CD4-positive, alpha-beta T cell (primary cell): ENCODE measurements at regions of chr3 and their contacts with region 1.

Region 1: GRCh38 chr3:112561731-112562688 is at the starts of genes ATG3 and SLC35A5:
- DNase-seq: peak; percentile 98 to 100 (median 99)
- ATAC-seq: peak; percentile 75
- H3K4me3 ChIP-seq: peak within 1 kb of the TSS; percentile 85
- H3K4me3 Mint-ChIP-seq: peak within 1 kb of the TSS; percentile 100
- H3K27ac ChIP-seq: peak within 1 kb of the TSS; percentile 94 to 98
- H3K27ac Mint-ChIP-seq: peak within 1 kb of the TSS; percentile 100
- H3K4me1 ChIP-seq: peaks cover 17% of the 10 kb centered on the region
- H3K4me1 Mint-ChIP-seq: peaks cover 73% of the 10 kb centered on the region
- H3K27me3 ChIP-seq: no peaks in the 10 kb centered on the region
- H3K27me3 Mint-ChIP-seq: no peaks in the 10 kb centered on the region
- CTCF ChIP-seq: no peak
- total RNA-seq, gene ATG3: 43.3 to 43.8 TPM
- total RNA-seq, gene SLC35A5: 4.6 to 7.3 TPM

Region 2: DNA sequence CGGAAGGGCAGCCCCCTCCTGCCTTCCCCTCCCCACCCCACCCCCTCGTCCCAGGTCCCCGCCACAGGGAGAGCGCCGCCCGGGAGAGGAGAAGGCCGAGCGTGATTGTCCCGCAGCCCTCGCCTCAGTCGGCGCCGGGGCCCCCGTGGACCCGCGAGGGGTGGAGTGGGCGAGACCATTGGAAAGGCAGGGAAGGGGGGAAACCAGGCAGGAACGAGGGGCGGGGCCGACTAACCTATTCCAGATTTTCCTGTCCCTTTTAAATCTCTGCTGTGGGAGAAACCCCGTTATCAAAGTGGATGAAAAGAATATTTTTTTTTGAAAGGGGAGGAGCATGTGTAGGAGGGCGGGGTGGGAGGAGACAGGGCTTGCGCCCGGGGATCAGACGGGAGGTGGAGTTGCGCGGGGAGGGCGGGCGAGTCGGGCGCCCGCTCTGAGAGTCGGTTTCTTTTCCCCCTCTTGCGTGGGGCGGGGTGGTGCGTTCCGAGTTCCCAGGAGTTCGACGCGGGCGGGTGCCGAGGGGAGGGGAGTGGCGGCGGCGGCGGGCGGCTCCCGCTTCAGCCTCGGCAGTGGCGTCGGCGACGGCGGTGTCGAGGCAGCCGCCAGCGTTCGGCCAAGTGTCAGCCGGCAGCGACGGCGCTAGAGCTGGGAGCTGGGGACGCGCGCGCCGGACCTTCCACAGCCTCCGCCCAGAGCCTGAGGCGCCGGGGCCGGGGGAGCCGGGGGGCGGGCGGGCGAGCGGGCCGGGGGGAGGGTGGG is 1490.6 kb before region 1 on chr3 and contains the start of gene NECTIN3:
- CTCF ChIA-PET with region 1: no interaction called
- POLR2A ChIA-PET with region 1: no interaction called
- intact Hi-C with region 1: loop called in 1 of 2 experiments (anchors 5 kb)
- DNase-seq: peak; percentile 71 to 95 (median 83)
- ATAC-seq: peak; percentile 93
- H3K4me3 ChIP-seq: peak within 1 kb of the TSS; percentile 78
- H3K4me3 Mint-ChIP-seq: peak within 1 kb of the TSS; percentile 97
- H3K27ac ChIP-seq: no peak within 1 kb of the TSS
- H3K27ac Mint-ChIP-seq: peak within 1 kb of the TSS; percentile 90
- H3K4me1 ChIP-seq: peaks cover 19% of the 10 kb centered on the region
- H3K4me1 Mint-ChIP-seq: peaks cover 44% of the 10 kb centered on the region
- H3K27me3 ChIP-seq: peaks cover 0 to 18% of the 10 kb centered on the region in 2 experiments
- H3K27me3 Mint-ChIP-seq: peaks cover 35% of the 10 kb centered on the region
- CTCF ChIP-seq: no peak
- total RNA-seq, gene NECTIN3: 7.8 to 8.5 TPM

Region 3: DNA sequence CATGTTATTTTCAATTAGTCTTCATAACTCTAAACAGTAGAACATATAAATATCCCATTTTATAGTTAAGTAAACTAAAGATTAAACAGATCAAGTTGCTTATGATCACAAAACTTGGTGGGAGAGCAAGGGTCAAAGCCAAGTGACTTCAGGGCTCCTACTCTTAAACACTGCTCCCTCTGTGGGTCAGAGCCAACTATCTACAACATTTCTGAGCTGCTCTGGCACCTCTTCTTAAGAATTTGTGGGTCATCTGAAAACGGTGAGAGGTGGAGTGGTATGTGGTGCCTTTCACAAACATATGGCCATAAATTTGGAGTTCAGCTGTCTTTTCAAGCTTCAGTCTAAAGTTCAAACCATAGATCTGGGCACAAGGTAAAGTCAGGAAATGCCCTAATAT is 11.2 kb before region 1 on chr3:
- CTCF ChIA-PET with region 1: interaction called, 5 read pairs
- POLR2A ChIA-PET with region 1: interaction called, 10 read pairs
- intact Hi-C with region 1: no loop called
- DNase-seq: no peak
- ATAC-seq: no peak
- H3K4me3 ChIP-seq: no peak overlapping the region
- H3K4me3 Mint-ChIP-seq: no peak overlapping the region
- H3K27ac ChIP-seq: no peak overlapping the region
- H3K27ac Mint-ChIP-seq: no peak overlapping the region
- H3K4me1 ChIP-seq: no peaks in the 10 kb centered on the region
- H3K4me1 Mint-ChIP-seq: peaks cover 40% of the 10 kb centered on the region
- H3K27me3 ChIP-seq: no peaks in the 10 kb centered on the region
- H3K27me3 Mint-ChIP-seq: no peaks in the 10 kb centered on the region
- CTCF ChIP-seq: no peak

Region 4: GRCh38 chr3:112579697-112580096 is 17.7 kb after region 1 on chr3:
- CTCF ChIA-PET with region 1: no interaction called
- POLR2A ChIA-PET with region 1: no interaction called
- intact Hi-C with region 1: no loop called
- DNase-seq: no peak
- ATAC-seq: no peak
- H3K4me3 ChIP-seq: no peak overlapping the region
- H3K4me3 Mint-ChIP-seq: no peak overlapping the region
- H3K27ac ChIP-seq: no peak overlapping the region
- H3K27ac Mint-ChIP-seq: no peak overlapping the region
- H3K4me1 ChIP-seq: no peaks in the 10 kb centered on the region
- H3K4me1 Mint-ChIP-seq: peaks cover 5% of the 10 kb centered on the region
- H3K27me3 ChIP-seq: no peaks in the 10 kb centered on the region
- H3K27me3 Mint-ChIP-seq: no peaks in the 10 kb centered on the region
- CTCF ChIP-seq: no peak

Region 5: GRCh38 chr3:112990672-112991602 is 428.9 kb after region 1 on chr3 and contains the start of gene GTPBP8:
- CTCF ChIA-PET with region 1: interaction called, 3 read pairs
- POLR2A ChIA-PET with region 1: interaction called, 14 read pairs
- intact Hi-C with region 1: no loop called
- DNase-seq: peak; percentile 68 to 93 (median 80)
- ATAC-seq: peak; percentile 89
- H3K4me3 ChIP-seq: peak within 1 kb of the TSS; percentile 74
- H3K4me3 Mint-ChIP-seq: peak within 1 kb of the TSS; percentile 97
- H3K27ac ChIP-seq: peak within 1 kb of the TSS; percentile 85 to 96
- H3K27ac Mint-ChIP-seq: peak within 1 kb of the TSS; percentile 93
- H3K4me1 ChIP-seq: peaks cover 26% of the 10 kb centered on the region
- H3K4me1 Mint-ChIP-seq: peaks cover 81% of the 10 kb centered on the region
- H3K27me3 ChIP-seq: no peaks in the 10 kb centered on the region
- H3K27me3 Mint-ChIP-seq: no peaks in the 10 kb centered on the region
- CTCF ChIP-seq: no peak
- total RNA-seq, gene GTPBP8: 27.0 to 30.3 TPM

Region 6: GRCh38 chr3:113514265-113514769 is 952.3 kb after region 1 on chr3:
- CTCF ChIA-PET with region 1: no interaction called
- POLR2A ChIA-PET with region 1: interaction called, 3 read pairs
- intact Hi-C with region 1: loop called (anchors 5 to 10 kb)
- DNase-seq: peak in 1 of 14 experiments; percentile 6
- ATAC-seq: peak; percentile 0
- H3K4me3 ChIP-seq: peak overlapping the region; percentile 82
- H3K4me3 Mint-ChIP-seq: no peak overlapping the region
- H3K27ac ChIP-seq: peak overlapping the region; percentile 87 to 93
- H3K27ac Mint-ChIP-seq: no peak overlapping the region
- H3K4me1 ChIP-seq: peaks cover 18% of the 10 kb centered on the region
- H3K4me1 Mint-ChIP-seq: peaks cover 7% of the 10 kb centered on the region
- H3K27me3 ChIP-seq: no peaks in the 10 kb centered on the region
- H3K27me3 Mint-ChIP-seq: peaks cover 16% of the 10 kb centered on the region
- CTCF ChIP-seq: no peak